ENCODE measurements at regions of chr18 and their contacts with region 1.

Region 1: DNA sequence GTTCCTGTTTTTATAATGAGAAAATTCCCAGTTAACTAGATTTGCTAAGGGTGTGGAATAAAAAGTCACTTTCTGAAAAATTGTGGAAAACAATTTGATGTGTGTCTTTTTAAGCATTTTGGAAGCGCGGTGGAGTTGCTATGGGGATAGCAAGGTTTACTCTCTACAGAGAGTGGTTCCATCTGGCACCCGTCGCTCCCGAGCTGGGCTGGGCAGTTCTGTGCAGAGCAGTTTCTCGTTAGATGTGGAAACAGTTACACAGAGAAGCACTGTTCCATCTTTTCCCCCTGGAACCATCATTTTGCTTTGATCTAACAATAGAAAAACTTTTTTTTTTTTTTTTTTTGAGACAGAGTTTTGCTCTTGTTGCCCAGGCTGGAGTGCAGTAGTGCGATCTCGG is 17.4 kb downstream of the LDLRAD4 start:
- DNase-seq: no peak
- ATAC-seq: no peak
- H3K4me3 ChIP-seq: no peak overlapping the region
- H3K27ac ChIP-seq: no peak overlapping the region
- H3K4me1 ChIP-seq: no peaks in the 10 kb centered on the region
- H3K27me3 ChIP-seq: peaks cover 0 to 2% of the 10 kb centered on the region in 2 experiments; a peak in 2 of 4 replicates
- CTCF ChIP-seq: no peak
- EP300 ChIP-seq: no peak
- POLR2A ChIP-seq: no peak
- RAD21 ChIP-seq: no peak

Region 2: DNA sequence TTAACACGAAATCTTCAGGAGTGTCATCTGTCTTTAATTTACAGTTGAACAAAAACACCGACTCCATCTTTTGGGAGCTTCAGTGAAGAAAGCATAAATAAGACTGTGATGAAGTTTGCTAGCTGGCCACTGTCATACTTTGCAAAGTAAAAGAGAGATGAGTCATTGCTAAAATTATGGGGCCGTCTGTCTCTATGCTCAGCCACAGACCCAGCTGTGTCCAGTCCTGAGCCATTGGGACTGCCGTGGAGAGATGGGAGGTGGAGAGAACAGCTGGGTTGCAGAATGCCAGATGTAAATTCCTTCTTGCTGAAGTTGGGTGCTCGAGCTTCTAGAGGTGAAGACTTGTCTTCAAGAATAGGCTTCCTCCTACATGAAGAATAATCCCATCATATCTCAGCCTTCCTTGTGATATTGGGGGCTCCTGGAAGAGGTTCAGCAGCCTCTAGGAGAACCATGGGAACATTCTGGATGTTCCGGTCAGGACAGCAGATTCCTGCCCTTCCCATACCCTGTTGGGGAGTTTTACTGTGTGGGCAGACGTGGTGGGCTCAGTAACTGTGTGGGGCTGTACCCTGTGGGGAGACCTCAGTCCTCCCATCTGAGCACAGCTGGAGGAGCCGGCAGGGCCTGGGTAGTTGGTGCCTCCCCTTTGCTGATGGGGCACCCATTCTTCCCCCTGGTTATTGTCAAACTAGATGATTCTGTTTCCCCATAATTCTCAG is 53.7 kb after region 1 on chr18:
- CTCF ChIA-PET with region 1: no interaction called
- POLR2A ChIA-PET with region 1: no interaction called
- RAD21 ChIA-PET with region 1: no interaction called
- SMC1A ChIA-PET with region 1: no interaction called
- in situ Hi-C with region 1: no loop called
- intact Hi-C with region 1: loop called (anchors 10 kb)
- DNase-seq: no peak
- ATAC-seq: peak; percentile 53
- H3K4me3 ChIP-seq: no peak overlapping the region
- H3K27ac ChIP-seq: no peak overlapping the region
- H3K4me1 ChIP-seq: no peaks in the 10 kb centered on the region
- H3K27me3 ChIP-seq: no peaks in the 10 kb centered on the region; a peak in 2 of 4 replicates
- CTCF ChIP-seq: no peak
- EP300 ChIP-seq: no peak
- POLR2A ChIP-seq: no peak
- RAD21 ChIP-seq: no peak

Measured in GM12878 (cell line).